HCT116 (cell line): ENCODE measurements at regions of chr7 and their contacts with region 1.

Region 1: DNA sequence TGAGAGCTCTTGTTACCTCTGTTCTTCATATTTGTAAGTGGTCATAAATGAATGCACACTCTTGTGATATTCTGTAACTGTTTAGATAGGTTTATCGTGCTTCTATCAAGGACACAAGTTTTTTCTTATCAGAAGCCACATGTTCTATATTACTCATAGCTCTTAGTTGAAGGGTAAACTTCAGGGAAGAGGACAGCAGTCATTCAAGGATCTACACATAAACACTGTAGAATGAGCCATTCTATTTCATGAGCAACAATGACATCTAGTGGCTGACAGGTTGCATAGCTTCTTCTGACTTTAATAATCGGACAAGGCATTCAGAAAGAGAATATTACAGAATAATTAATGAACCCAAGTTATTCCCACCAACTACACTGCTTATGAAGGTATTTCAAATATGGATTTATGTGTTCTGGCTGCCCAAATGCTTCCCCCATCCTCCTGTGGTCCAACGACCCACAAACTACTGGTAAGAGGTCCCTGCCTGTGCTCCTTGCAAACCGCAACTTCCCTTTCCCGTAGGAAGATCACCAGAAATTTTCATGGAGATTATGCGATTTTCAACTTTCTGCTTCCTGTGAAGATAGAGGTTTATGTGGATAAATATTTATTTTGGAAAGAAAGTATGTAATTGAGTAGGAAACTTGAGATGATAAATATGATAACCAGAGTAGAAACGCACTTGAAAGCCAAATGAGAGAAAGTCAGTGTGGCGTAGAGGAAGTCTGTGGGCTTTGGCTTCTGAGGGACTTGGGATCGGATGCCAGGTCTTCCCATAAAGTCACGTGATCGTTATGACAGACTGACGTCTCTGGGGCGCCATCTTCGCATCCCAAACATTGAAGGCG is 16.8 kb upstream of the ABCB5 start:
- DNase-seq: peak; percentile 48
- ATAC-seq: peak; percentile 83
- H3K4me3 ChIP-seq: no peak overlapping the region
- H3K27ac ChIP-seq: no peak overlapping the region
- H3K4me1 ChIP-seq: no peaks in the 10 kb centered on the region
- H3K27me3 ChIP-seq: no peaks in the 10 kb centered on the region
- CTCF ChIP-seq: peak; percentile 61 to 83 (median 82)
- POLR2A ChIP-seq: no peak
- RAD21 ChIP-seq: peak; percentile 93

Region 2: GRCh38 chr7:19713676-19714075 is 885.0 kb before region 1 on chr7:
- CTCF ChIA-PET with region 1: interaction called, 95 read pairs
- POLR2A ChIA-PET with region 1: interaction called, 6 read pairs
- RAD21 ChIA-PET with region 1: interaction called, 12 to 23 read pairs
- intact Hi-C with region 1: loop called (anchors 1 kb)
- DNase-seq: peak; percentile 51
- ATAC-seq: peak; percentile 48; the same call in 1 of the 2 replicates
- H3K4me3 ChIP-seq: no peak overlapping the region
- H3K27ac ChIP-seq: no peak overlapping the region
- H3K4me1 ChIP-seq: peaks cover 0 to 7% of the 10 kb centered on the region in 2 experiments; a peak in 2 of 4 replicates
- H3K27me3 ChIP-seq: no peaks in the 10 kb centered on the region
- CTCF ChIP-seq: peak; percentile 50 to 74 (median 53); a peak in 5 of 6 replicates
- POLR2A ChIP-seq: no peak
- RAD21 ChIP-seq: peak; percentile 64

Region 3: DNA sequence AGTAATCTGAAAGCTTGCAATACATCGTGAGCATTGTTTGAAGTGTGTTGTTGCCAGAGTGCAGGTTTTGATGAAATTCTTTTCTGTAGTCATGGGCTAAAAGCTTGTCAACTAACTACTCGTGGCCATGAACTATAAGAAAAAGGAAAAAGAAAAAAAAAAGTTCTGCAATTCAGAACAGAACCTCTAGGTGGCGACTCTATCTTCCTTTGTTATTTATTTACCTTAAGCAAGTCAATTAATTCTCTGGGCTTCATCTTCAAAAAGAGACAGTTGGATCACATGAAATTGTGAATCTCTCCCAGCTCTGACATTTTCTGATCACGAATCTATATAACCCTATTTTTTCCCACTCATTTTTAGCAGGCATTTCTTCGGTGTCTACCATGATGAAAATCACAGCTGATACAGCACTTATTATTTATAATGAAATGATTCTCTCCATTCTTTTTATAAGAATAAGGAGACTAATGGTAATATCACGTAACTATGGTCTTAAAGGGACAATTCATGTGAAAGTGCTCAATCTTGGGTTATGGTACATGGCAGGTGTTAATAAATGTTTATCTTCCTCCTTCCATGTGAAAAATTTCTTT is 844.1 kb before region 1 on chr7:
- CTCF ChIA-PET with region 1: interaction called, 12 read pairs
- POLR2A ChIA-PET with region 1: no interaction called
- RAD21 ChIA-PET with region 1: no interaction called
- intact Hi-C with region 1: no loop called
- DNase-seq: peak; percentile 51
- ATAC-seq: 0 out of 2 replicates have a peak, but pooled peaks have one; percentile 46
- H3K4me3 ChIP-seq: no peak overlapping the region
- H3K27ac ChIP-seq: no peak overlapping the region
- H3K4me1 ChIP-seq: no peaks in the 10 kb centered on the region
- H3K27me3 ChIP-seq: no peaks in the 10 kb centered on the region
- CTCF ChIP-seq: peak; percentile 58 to 80 (median 65)
- POLR2A ChIP-seq: no peak
- RAD21 ChIP-seq: peak; percentile 80

Region 4: DNA sequence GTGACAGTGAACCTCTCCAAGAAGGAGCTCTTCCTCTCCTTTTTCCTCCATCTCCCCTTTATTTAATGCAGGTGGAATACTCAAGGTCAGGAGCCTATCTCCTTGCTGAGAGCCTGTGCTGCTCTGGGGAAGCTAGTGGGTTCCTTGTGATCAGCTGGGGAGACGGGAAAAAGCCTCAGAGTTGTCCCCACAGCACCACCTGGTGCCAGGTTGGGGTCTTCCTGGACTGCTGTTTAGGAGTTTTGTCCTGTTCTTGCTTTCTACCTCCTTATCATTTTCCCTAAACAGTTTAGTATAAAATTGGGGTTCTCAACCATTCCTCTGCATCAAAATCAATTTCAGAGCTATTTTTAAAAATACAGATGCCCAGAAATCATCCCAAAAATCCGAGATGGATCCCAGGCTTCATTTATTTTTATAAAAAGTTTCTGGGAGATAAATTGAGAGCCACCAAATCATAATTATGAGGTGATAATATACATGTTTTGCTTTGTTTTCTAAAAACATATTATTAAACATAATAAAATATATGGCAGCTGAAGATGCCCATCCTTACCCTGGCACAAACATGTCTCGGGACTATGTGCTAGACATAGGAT is 425.8 kb before region 1 on chr7:
- CTCF ChIA-PET with region 1: interaction called, 4 read pairs
- POLR2A ChIA-PET with region 1: no interaction called
- RAD21 ChIA-PET with region 1: no interaction called
- intact Hi-C with region 1: loop called (anchors 2 kb)
- DNase-seq: peak; percentile 52
- ATAC-seq: peak; percentile 98
- H3K4me3 ChIP-seq: no peak overlapping the region
- H3K27ac ChIP-seq: no peak overlapping the region
- H3K4me1 ChIP-seq: no peaks in the 10 kb centered on the region
- H3K27me3 ChIP-seq: no peaks in the 10 kb centered on the region
- CTCF ChIP-seq: peak; percentile 61 to 80 (median 78); a peak in 5 of 6 replicates
- POLR2A ChIP-seq: no peak
- RAD21 ChIP-seq: peak; percentile 77